Activated B cell treated with CpG ODN at 0.5 μM for 24 hours (primary cell): ENCODE measurements at regions of chr19 and their contacts with region 1.

Region 1: GRCh38 chr19:49148784-49149651 is 6.2 kb downstream of the HRC start:
- DNase-seq: peak; percentile 72
- ATAC-seq: peak; percentile 66
- H3K4me3 Mint-ChIP-seq: peak overlapping the region; percentile 82
- H3K27ac Mint-ChIP-seq: no peak overlapping the region
- H3K4me1 Mint-ChIP-seq: peaks cover 37% of the 10 kb centered on the region
- H3K27me3 Mint-ChIP-seq: peaks cover 50% of the 10 kb centered on the region
- CTCF ChIP-seq: no peak

Region 2: GRCh38 chr19:49073514-49074378 is 75.3 kb before region 1 on chr19:
- CTCF ChIA-PET with region 1: no interaction called
- POLR2A ChIA-PET with region 1: no interaction called
- intact Hi-C with region 1: loop called (anchors 1 kb)
- DNase-seq: no peak
- ATAC-seq: no peak
- H3K4me3 Mint-ChIP-seq: peak overlapping the region; percentile 2
- H3K27ac Mint-ChIP-seq: no peak overlapping the region
- H3K4me1 Mint-ChIP-seq: peaks cover 19% of the 10 kb centered on the region
- H3K27me3 Mint-ChIP-seq: peaks cover 50% of the 10 kb centered on the region
- CTCF ChIP-seq: no peak

Region 3: DNA sequence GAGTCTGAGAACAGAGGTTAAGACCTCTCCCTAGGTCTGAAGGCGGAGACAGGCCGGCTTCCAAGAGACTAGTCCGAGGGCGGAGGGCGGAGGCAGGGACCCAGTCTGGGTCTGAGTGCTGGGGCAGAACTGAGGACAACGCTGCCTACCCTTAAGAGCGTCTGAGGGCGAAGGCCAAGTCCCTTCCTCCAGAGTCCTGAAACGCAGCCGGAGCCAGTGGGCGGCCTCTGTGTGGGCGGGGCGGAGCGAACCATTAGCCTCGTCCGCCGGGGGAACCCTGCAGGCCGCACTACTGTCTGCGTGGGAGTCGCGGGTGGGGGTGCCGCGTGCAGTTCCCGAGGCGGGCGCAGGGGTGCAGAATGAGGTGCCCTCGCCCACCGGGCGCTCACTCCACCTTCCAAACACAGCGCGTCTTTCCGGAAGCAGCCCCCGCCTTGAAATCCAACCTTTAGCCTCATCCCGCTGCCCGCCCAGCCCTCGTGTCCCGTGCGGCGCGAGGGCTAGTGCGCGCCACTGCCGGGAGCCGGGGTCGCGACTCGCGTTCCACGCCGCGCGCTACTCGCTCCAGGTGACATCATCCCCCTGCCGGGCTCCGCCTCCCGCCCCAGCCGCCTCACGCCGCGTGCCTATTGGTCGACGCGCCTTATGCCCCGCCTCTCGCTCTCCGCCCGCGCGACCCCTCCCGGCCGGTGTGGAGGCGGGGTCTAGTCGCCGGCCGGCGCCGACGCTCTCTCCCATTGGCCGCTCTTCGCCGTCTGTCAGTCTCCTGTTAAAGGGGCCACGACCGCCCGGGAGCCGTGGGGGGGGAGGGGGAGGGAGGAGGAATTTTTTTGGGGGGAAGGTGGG is 30.2 kb before region 1 on chr19 and contains the start of gene C19orf73:
- CTCF ChIA-PET with region 1: interaction called, 7 read pairs
- POLR2A ChIA-PET with region 1: no interaction called
- intact Hi-C with region 1: loop called (anchors 2 kb)
- DNase-seq: peak; percentile 96
- ATAC-seq: peak; percentile 82
- H3K4me3 Mint-ChIP-seq: peak within 1 kb of the TSS; percentile 84
- H3K27ac Mint-ChIP-seq: peak within 1 kb of the TSS; percentile 87
- H3K4me1 Mint-ChIP-seq: peaks cover 44% of the 10 kb centered on the region
- H3K27me3 Mint-ChIP-seq: peaks cover 7% of the 10 kb centered on the region
- CTCF ChIP-seq: no peak
- total RNA-seq, gene C19orf73: 0.98 and 1.0 TPM in 2 replicates

Region 4: GRCh38 chr19:49127674-49128544 is 21.1 kb before region 1 on chr19:
- CTCF ChIA-PET with region 1: no interaction called
- POLR2A ChIA-PET with region 1: interaction called, 6 read pairs
- intact Hi-C with region 1: loop called (anchors 2 kb)
- DNase-seq: peak; percentile 90
- ATAC-seq: peak; percentile 96
- H3K4me3 Mint-ChIP-seq: peak overlapping the region; percentile 86
- H3K27ac Mint-ChIP-seq: peak overlapping the region; percentile 71
- H3K4me1 Mint-ChIP-seq: peaks cover 12% of the 10 kb centered on the region
- H3K27me3 Mint-ChIP-seq: peaks cover 4% of the 10 kb centered on the region
- CTCF ChIP-seq: no peak

Region 5: GRCh38 chr19:49200238-49200862 is 51.3 kb after region 1 on chr19:
- CTCF ChIA-PET with region 1: interaction called, 3 read pairs
- POLR2A ChIA-PET with region 1: no interaction called
- intact Hi-C with region 1: loop called (anchors 5 kb)
- DNase-seq: no peak
- ATAC-seq: no peak
- H3K4me3 Mint-ChIP-seq: no peak overlapping the region
- H3K27ac Mint-ChIP-seq: no peak overlapping the region
- H3K4me1 Mint-ChIP-seq: peaks cover 7% of the 10 kb centered on the region
- H3K27me3 Mint-ChIP-seq: peaks cover 2% of the 10 kb centered on the region
- CTCF ChIP-seq: no peak

Region 6: GRCh38 chr19:49264258-49264657 is 115.2 kb after region 1 on chr19:
- CTCF ChIA-PET with region 1: no interaction called
- POLR2A ChIA-PET with region 1: no interaction called
- intact Hi-C with region 1: no loop called
- DNase-seq: no peak
- ATAC-seq: no peak
- H3K4me3 Mint-ChIP-seq: no peak overlapping the region
- H3K27ac Mint-ChIP-seq: no peak overlapping the region
- H3K4me1 Mint-ChIP-seq: peaks cover 6% of the 10 kb centered on the region
- H3K27me3 Mint-ChIP-seq: peaks cover 13% of the 10 kb centered on the region
- CTCF ChIP-seq: no peak